ENCODE measurements at regions of chr6 and their contacts with region 1.

Region 1: GRCh38 chr6:165439928-165440554 is 130.6 kb upstream of the C6orf118 start:
- DNase-seq: no peak

Region 2: DNA sequence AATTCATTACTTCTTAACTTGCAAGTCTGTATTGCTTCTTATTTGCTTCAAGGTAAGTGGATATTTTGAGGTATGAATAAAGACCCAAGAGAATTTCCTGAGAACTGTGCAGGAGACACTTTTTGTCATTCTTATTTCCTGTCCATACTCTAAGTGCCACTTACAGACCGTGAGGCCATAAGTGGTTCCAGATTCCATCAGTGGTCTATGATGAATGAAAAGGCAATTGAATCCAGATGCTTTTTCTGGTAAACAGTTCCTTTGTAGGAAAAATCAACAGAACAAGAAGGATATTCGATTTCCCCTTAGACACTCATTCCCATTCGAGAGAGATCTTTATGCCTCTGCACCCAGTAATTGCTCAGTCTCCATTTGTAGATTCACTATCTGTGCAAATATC is 281.3 kb after region 1 on chr6:
- intact Hi-C with region 1: loop called (anchors 5 kb)
- DNase-seq: no peak

Region 3: DNA sequence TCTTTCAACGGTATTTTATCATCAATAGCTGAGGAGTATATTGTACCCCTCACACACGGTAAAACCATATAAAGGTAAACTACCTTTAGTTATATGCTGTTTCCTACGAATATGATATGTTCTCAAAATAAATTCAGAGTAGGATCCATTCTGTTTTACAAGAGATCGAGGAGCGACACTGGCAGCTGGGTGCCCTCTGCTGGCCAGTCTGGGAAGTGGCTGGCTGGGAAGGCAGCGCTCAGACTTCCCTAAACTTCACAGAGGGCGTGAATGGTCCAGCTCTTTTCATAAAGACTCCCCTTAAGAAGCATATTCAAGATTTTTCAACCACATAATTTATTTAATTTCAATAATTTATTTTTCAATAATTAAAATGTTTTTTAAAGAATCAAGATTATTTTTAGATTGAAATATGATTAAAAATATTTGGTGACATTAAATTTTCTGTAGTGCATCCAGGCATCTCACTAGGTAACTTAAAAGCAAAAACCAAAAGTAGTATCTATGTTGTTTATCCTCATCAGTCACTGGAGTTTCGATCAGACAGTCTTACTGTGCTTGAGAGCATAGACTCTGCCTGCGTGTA is 410.5 kb after region 1 on chr6:
- intact Hi-C with region 1: loop called (anchors 2 kb)
- DNase-seq: peak; percentile 86

Region 4: DNA sequence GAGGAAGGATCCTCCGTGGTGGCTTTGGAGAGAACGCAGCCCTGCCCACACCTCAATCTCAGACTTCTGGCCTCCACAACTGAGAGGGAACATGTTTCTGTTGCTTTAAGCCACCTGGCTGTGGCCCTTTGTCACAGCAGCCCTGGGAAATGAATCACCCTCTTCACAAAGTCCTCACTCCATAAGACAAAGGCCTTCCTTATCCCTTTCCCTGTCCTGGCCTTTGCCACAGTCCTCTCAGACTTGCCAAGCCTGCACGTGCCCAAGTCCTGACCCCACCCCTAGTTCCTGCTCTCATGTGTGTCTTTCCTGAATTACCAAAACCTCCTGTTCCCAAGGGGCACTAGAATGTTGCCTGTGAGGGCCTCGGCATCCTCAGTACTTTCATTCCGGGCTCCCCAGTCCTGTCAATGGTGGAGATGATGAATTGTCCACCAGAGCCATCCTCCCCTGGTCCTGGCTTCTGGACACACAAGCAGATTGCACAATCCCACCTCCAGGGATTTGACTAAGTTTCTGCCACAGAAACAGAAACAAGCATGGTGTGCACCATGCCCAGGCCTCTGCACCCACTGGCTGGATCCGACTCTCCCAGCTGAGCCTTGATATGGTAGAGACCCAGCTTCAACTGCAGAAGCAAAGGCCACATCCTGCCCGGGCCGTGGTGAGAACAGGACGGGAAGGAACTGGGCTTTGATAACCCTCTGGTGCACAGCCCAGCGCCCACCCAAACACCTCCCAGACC is 455.6 kb after region 1 on chr6:
- intact Hi-C with region 1: no loop called
- DNase-seq: no peak